Common myeloid progenitor, CD34-positive (primary cell): ENCODE measurements at regions of chr13 and their contacts with region 1.

Region 1: GRCh38 chr13:52968074-52968700 is 60.4 kb upstream of the OLFM4 start:
- DNase-seq: peak; percentile 64 to 85 (median 83)
- H3K4me3 ChIP-seq: no peak overlapping the region
- H3K27ac ChIP-seq: no peak overlapping the region
- H3K4me1 ChIP-seq: no peaks in the 10 kb centered on the region
- H3K27me3 ChIP-seq: peaks cover 0 to 9% (median 3%) of the 10 kb centered on the region in 5 experiments

Region 2: GRCh38 chr13:52862358-52863206 is 105.6 kb before region 1 on chr13:
- CTCF ChIA-PET with region 1: interaction called, 59 read pairs
- POLR2A ChIA-PET with region 1: no interaction called
- DNase-seq: peak in 2 of 3 donors; percentile 36 to 56
- H3K4me3 ChIP-seq: no peak overlapping the region
- H3K27ac ChIP-seq: no peak overlapping the region
- H3K4me1 ChIP-seq: no peaks in the 10 kb centered on the region
- H3K27me3 ChIP-seq: peaks cover 0 to 4% (median 2%) of the 10 kb centered on the region in 5 experiments

Region 3: DNA sequence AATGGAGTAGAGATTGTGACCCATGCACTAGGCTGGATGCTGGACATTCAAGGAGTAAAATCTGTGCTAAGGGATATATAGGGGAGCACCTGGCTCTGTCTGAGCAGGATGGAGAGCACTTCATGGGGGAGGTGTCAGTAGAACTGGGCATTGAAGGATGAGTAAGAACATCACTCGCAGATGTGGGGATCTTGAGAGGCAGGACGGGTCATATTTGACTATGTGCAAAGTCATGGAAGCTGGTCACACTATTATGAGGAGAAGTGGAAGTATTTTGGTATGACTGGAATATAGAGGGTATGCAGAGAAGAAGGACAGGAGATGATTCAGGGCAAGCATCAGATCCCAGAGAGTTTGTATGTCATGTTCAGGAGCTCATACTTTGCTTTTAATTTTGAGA is 56.8 kb before region 1 on chr13:
- CTCF ChIA-PET with region 1: interaction called, 12 read pairs
- POLR2A ChIA-PET with region 1: no interaction called
- DNase-seq: no peak
- H3K4me3 ChIP-seq: no peak overlapping the region
- H3K27ac ChIP-seq: no peak overlapping the region
- H3K4me1 ChIP-seq: no peaks in the 10 kb centered on the region
- H3K27me3 ChIP-seq: peaks cover 0 to 10% (median 3%) of the 10 kb centered on the region in 5 experiments

Region 4: DNA sequence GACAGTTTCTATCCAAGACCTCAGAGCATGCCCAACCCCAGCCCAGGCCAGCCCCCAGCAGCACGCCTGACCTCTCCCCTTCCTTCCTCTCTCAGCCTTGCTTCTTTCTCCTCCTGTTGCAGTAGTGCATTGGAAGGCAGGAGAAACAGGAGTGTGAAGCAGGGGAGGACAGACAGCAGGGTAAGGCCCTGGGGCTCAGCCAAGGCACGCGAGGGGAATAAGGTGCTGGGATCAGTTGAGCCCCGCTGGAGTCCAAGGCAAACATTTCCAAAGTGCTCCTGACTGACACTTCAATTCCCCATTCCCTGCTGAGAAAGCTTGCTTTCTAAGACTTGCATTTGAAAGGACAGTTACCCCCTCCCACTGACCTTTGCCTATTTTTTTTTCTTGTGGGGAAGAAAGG is 12.7 kb before region 1 on chr13:
- CTCF ChIA-PET with region 1: interaction called, 14 read pairs
- POLR2A ChIA-PET with region 1: no interaction called
- DNase-seq: no peak
- H3K4me3 ChIP-seq: no peak overlapping the region
- H3K27ac ChIP-seq: no peak overlapping the region
- H3K4me1 ChIP-seq: no peaks in the 10 kb centered on the region
- H3K27me3 ChIP-seq: no peaks in the 10 kb centered on the region

Region 5: GRCh38 chr13:53004573-53004972 is 36.4 kb after region 1 on chr13:
- CTCF ChIA-PET with region 1: no interaction called
- POLR2A ChIA-PET with region 1: no interaction called
- DNase-seq: peak in 1 of 3 donors; percentile 4
- H3K4me3 ChIP-seq: no peak overlapping the region
- H3K27ac ChIP-seq: no peak overlapping the region
- H3K4me1 ChIP-seq: peaks cover 3 to 12% (median 10%) of the 10 kb centered on the region in 4 experiments
- H3K27me3 ChIP-seq: no peaks in the 10 kb centered on the region